Natural killer cell (primary cell): ENCODE measurements at regions of chr16 and their contacts with region 1.

Region 1: GRCh38 chr16:74709441-74709877 is 8.8 kb upstream of the MLKL start:
- DNase-seq: peak; percentile 75 to 92
- ATAC-seq: peak; percentile 95 to 100 (median 100)
- H3K4me3 ChIP-seq: no peak overlapping the region
- H3K4me3 Mint-ChIP-seq: no peak overlapping the region
- H3K27ac ChIP-seq: no peak overlapping the region
- H3K27ac Mint-ChIP-seq: peak overlapping the region; percentile 1 to 20
- H3K4me1 ChIP-seq: no peaks in the 10 kb centered on the region
- H3K4me1 Mint-ChIP-seq: peaks cover 5 to 6% of the 10 kb centered on the region in 2 donors
- H3K27me3 ChIP-seq: no peaks in the 10 kb centered on the region
- H3K27me3 Mint-ChIP-seq: no peaks in the 10 kb centered on the region
- CTCF ChIP-seq: peak; percentile 98

Region 2: DNA sequence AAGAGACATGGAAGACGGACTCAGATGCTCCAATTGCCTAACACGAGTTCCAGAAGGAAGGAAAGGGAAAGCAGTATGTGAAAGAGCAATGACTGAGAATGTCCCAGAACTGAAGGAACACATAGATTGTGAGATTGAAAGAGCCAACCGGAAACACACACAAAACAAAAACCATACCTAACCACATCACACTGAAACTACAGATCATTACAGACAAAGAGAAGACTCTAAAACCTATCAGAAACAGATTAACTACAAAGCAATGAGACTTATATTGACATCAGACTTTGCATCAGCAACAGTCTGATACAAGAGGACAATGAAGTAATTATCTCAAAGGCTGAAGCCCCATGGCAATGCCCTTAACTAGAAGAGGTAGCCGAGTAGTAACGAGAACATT is 242.6 kb before region 1 on chr16:
- intact Hi-C with region 1: no loop called
- DNase-seq: peak in 1 of 2 donors; percentile 11
- ATAC-seq: no peak
- H3K4me3 ChIP-seq: no peak overlapping the region
- H3K4me3 Mint-ChIP-seq: no peak overlapping the region
- H3K27ac ChIP-seq: no peak overlapping the region
- H3K27ac Mint-ChIP-seq: peak overlapping the region in 1 of 2 donors; percentile 23
- H3K4me1 ChIP-seq: no peaks in the 10 kb centered on the region
- H3K4me1 Mint-ChIP-seq: no peaks in the 10 kb centered on the region
- H3K27me3 ChIP-seq: no peaks in the 10 kb centered on the region
- H3K27me3 Mint-ChIP-seq: no peaks in the 10 kb centered on the region
- CTCF ChIP-seq: no peak

Region 3: DNA sequence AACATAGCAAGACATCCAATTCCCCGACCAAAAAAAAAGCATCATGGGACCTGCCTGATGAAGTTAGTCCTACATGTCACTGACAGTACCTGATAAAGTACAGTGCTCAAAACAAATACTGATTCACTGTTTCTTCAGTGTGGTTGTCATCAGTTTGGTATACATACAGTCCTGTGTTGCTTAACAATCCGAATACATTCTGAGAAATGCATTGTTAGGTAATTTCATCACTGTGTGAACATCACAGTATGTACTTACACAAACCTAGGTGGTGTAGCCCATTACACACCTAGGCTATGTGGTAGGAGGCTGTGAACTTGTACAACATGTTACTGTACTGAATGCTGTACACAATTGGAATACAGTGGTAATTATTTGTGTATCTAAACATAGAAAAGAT is 84.1 kb after region 1 on chr16:
- intact Hi-C with region 1: no loop called
- DNase-seq: no peak
- ATAC-seq: no peak
- H3K4me3 ChIP-seq: no peak overlapping the region
- H3K4me3 Mint-ChIP-seq: no peak overlapping the region
- H3K27ac ChIP-seq: no peak overlapping the region
- H3K27ac Mint-ChIP-seq: no peak overlapping the region
- H3K4me1 ChIP-seq: no peaks in the 10 kb centered on the region
- H3K4me1 Mint-ChIP-seq: no peaks in the 10 kb centered on the region
- H3K27me3 ChIP-seq: peaks cover 3% of the 10 kb centered on the region
- H3K27me3 Mint-ChIP-seq: peaks cover 22 to 39% of the 10 kb centered on the region in 2 donors
- CTCF ChIP-seq: no peak

Region 4: GRCh38 chr16:74862741-74863244 is 153.3 kb after region 1 on chr16:
- intact Hi-C with region 1: loop called (anchors 1 kb)
- DNase-seq: peak in 1 of 2 donors; percentile 65
- ATAC-seq: no peak
- H3K4me3 ChIP-seq: no peak overlapping the region
- H3K4me3 Mint-ChIP-seq: no peak overlapping the region
- H3K27ac ChIP-seq: no peak overlapping the region
- H3K27ac Mint-ChIP-seq: no peak overlapping the region
- H3K4me1 ChIP-seq: no peaks in the 10 kb centered on the region
- H3K4me1 Mint-ChIP-seq: no peaks in the 10 kb centered on the region
- H3K27me3 ChIP-seq: no peaks in the 10 kb centered on the region
- H3K27me3 Mint-ChIP-seq: peaks cover 2 to 7% of the 10 kb centered on the region in 2 donors
- CTCF ChIP-seq: peak; percentile 52

Region 5: GRCh38 chr16:74984535-74985296 is 275.3 kb after region 1 on chr16 and contains the start of gene WDR59:
- intact Hi-C with region 1: loop called (anchors 10 kb)
- DNase-seq: peak; percentile 97 to 100
- ATAC-seq: peak; percentile 98 to 100 (median 98)
- H3K4me3 ChIP-seq: peak within 1 kb of the TSS; percentile 79
- H3K4me3 Mint-ChIP-seq: peak within 1 kb of the TSS; percentile 94
- H3K27ac ChIP-seq: peak within 1 kb of the TSS; percentile 55
- H3K27ac Mint-ChIP-seq: peak within 1 kb of the TSS; percentile 79 to 82
- H3K4me1 ChIP-seq: peaks cover 11% of the 10 kb centered on the region
- H3K4me1 Mint-ChIP-seq: peaks cover 3 to 7% of the 10 kb centered on the region in 2 donors
- H3K27me3 ChIP-seq: no peaks in the 10 kb centered on the region
- H3K27me3 Mint-ChIP-seq: no peaks in the 10 kb centered on the region
- CTCF ChIP-seq: no peak
- total RNA-seq, gene WDR59: 60.5 to 83.7 (median 73.2) TPM

Region 6: DNA sequence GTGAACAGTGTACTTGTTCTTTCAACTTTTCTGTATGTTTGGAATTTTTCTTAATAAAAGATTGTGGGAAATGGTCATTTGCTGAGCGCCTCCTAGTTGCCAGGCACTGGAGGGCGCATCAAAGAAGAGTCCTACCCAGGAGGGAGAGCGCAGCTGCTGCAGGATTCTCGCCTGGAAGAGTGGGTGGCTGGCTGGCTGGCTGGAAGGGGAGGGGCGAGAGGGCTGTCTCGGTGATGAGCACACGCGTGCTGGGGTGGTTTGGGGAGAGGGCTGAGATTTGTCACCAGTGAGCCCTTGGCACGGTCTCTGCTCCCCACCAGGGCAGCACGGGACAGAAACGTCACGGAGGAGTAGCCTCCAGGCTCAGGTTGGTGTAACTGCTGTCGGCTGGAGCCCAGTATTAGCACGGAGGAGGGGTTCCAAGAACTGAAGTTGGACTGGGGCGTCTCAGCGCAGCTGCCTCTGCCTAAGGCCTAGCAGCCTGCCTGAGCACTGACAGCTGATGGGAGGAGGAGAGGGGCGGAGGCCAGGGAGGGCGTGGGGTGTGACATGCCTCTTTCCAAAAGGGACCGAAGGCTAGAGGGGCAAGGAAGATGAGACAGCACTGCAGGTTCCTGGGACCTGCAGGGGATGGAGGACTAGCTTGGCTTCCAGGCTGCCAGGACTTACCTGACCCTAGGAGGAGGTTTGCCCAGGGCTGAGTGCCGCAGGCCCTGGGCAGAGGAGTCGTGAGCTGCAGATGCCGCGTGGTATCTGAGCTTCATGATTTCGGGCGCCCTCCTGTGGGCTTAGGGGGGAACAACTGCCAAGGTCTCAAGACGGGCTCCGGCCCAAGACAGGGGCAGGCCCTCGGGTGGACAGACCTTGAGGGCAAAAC is 401.4 kb after region 1 on chr16:
- intact Hi-C with region 1: loop called (anchors 1 kb)
- DNase-seq: peak; percentile 76 to 92
- ATAC-seq: peak; percentile 92 to 99 (median 97)
- H3K4me3 ChIP-seq: no peak overlapping the region
- H3K4me3 Mint-ChIP-seq: no peak overlapping the region
- H3K27ac ChIP-seq: no peak overlapping the region
- H3K27ac Mint-ChIP-seq: peak overlapping the region in 1 of 2 donors; percentile 31
- H3K4me1 ChIP-seq: peaks cover 37% of the 10 kb centered on the region
- H3K4me1 Mint-ChIP-seq: peaks cover 0 to 20% of the 10 kb centered on the region in 2 donors
- H3K27me3 ChIP-seq: peaks cover 6% of the 10 kb centered on the region
- H3K27me3 Mint-ChIP-seq: peaks cover 24 to 42% of the 10 kb centered on the region in 2 donors
- CTCF ChIP-seq: peak; percentile 78